ENCODE measurements at regions of chr20 and their contacts with region 1.

Region 1: GRCh38 chr20:10673988-10674711 is at the start of gene JAG1:
- DNase-seq: peak; percentile 71
- H3K4me3 Mint-ChIP-seq: peak within 1 kb of the TSS; percentile 89
- H3K27ac Mint-ChIP-seq: peak within 1 kb of the TSS; percentile 92
- H3K4me1 Mint-ChIP-seq: peaks cover 26% of the 10 kb centered on the region
- H3K27me3 Mint-ChIP-seq: peaks cover 64% of the 10 kb centered on the region
- total RNA-seq, gene JAG1: 1.3 and 1.4 TPM in 2 replicates

Region 2: GRCh38 chr20:10511509-10512251 is 162.5 kb before region 1 on chr20:
- intact Hi-C with region 1: loop called (anchors 2 kb)
- DNase-seq: peak; percentile 70
- H3K4me3 Mint-ChIP-seq: peak overlapping the region; percentile 36
- H3K27ac Mint-ChIP-seq: peak overlapping the region; percentile 64
- H3K4me1 Mint-ChIP-seq: peaks cover 44% of the 10 kb centered on the region
- H3K27me3 Mint-ChIP-seq: no peaks in the 10 kb centered on the region

Region 3: GRCh38 chr20:10521068-10521831 is 152.9 kb before region 1 on chr20:
- intact Hi-C with region 1: loop called (anchors 2 kb)
- DNase-seq: no peak
- H3K4me3 Mint-ChIP-seq: no peak overlapping the region
- H3K27ac Mint-ChIP-seq: peak overlapping the region; percentile 13
- H3K4me1 Mint-ChIP-seq: peaks cover 41% of the 10 kb centered on the region
- H3K27me3 Mint-ChIP-seq: peaks cover 1% of the 10 kb centered on the region

Region 4: GRCh38 chr20:10553326-10553984 is 120.7 kb before region 1 on chr20:
- intact Hi-C with region 1: loop called (anchors 1 kb)
- DNase-seq: peak; percentile 19
- H3K4me3 Mint-ChIP-seq: no peak overlapping the region
- H3K27ac Mint-ChIP-seq: no peak overlapping the region
- H3K4me1 Mint-ChIP-seq: peaks cover 39% of the 10 kb centered on the region
- H3K27me3 Mint-ChIP-seq: no peaks in the 10 kb centered on the region

Region 5: DNA sequence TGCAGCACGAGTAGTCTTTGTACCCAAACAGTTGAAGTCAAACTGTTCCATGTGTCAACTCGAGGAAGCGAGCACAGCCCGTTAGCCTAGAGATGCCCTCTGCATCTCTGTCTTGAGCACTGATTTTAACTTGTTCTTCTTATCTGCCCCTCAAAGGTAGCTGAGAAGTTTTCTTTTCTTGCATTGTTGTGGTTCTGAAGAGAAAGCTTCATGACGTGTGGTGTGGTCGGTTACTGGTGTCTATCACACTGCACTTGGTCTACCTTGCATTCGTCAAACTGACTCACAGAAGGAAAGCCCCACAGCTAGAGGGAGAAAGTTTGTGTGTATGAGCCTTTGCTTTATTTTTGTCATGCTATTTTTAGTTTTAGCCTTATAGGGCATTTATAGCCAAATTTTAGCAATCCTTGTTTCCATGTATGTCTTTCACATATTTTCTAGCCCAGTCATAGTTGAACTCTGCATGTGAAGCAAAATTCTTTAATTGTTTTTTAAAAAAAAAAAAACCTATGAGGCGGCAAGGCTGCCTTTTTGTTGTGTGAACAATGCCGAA is 115.4 kb before region 1 on chr20:
- intact Hi-C with region 1: loop called (anchors 1 kb)
- DNase-seq: peak; percentile 53
- H3K4me3 Mint-ChIP-seq: no peak overlapping the region
- H3K27ac Mint-ChIP-seq: peak overlapping the region; percentile 61
- H3K4me1 Mint-ChIP-seq: peaks cover 36% of the 10 kb centered on the region
- H3K27me3 Mint-ChIP-seq: no peaks in the 10 kb centered on the region

Region 6: GRCh38 chr20:10603971-10604864 is 69.9 kb before region 1 on chr20:
- intact Hi-C with region 1: loop called (anchors 1 kb)
- DNase-seq: no peak
- H3K4me3 Mint-ChIP-seq: no peak overlapping the region
- H3K27ac Mint-ChIP-seq: no peak overlapping the region
- H3K4me1 Mint-ChIP-seq: peaks cover 14% of the 10 kb centered on the region
- H3K27me3 Mint-ChIP-seq: no peaks in the 10 kb centered on the region

Region 7: GRCh38 chr20:11890331-11891080 is 1216.4 kb after region 1 on chr20:
- intact Hi-C with region 1: loop called (anchors 5 kb)
- DNase-seq: peak; percentile 55
- H3K4me3 Mint-ChIP-seq: peak overlapping the region; percentile 82
- H3K27ac Mint-ChIP-seq: peak overlapping the region; percentile 1
- H3K4me1 Mint-ChIP-seq: peaks cover 25% of the 10 kb centered on the region
- H3K27me3 Mint-ChIP-seq: peaks cover 19% of the 10 kb centered on the region